Aorta (tissue), 5 donors: ENCODE measurements at regions of chr4 and their contacts with region 1.

Region 1: DNA sequence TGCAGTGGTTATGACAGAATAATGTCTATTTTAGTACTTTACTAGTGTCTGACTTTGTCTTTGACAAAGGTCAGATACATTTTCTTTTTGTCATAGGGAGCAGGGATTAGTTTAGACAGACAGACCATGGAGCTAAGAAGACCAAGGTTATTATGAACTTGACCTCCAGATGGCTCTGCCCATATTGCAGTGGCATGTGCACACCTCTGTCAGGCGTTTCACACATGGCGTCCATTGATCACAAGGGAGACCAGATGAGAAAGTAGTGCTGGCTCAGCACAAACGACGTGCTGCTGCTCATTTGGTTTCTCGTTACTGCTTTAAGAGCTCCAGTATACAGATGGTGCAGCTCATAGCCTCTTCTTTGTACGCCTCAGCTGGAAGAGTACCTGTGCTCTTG is 56.3 kb upstream of the HPSE start:
- DNase-seq: no peak
- ATAC-seq: no peak
- H3K4me3 ChIP-seq: peak overlapping the region in 1 of 2 donors; percentile 3
- H3K27ac ChIP-seq: no peak overlapping the region
- H3K4me1 ChIP-seq: no peaks in the 10 kb centered on the region
- H3K27me3 ChIP-seq: no peaks in the 10 kb centered on the region

Region 2: DNA sequence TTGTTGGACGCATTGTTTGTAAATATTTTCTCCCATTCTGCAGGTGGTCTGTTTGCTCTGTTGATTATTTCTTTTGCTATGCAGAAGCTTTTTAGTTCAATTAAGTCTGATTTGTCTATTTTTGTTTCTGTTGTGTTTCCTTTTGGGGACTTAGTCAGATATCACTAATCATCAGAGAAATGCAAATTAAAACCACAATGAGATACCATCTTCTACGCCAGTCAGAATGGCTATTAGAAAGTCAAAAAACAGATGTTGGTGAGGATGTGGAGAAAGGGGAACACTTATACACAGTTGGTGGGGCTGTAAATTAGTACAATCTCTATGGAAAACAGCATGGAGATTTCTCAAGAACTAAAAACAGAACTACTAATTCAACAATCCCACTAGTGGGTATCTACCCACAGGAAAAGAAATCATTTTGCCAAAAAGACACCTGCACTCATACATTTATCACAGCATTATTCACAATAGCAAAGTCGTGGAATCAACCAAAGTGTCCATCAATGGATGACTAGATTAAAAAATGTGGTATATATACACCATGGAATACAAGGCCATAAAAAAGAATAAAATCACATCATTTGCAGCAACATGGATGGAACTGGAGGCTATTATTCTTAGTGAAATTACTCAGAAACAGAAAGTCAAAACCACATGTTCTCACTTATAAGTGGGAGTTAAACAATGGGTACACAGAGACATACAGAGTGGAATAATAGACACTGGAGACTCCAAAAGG is 114.5 kb before region 1 on chr4:
- intact Hi-C with region 1: no loop called
- DNase-seq: no peak
- ATAC-seq: no peak
- H3K4me3 ChIP-seq: no peak overlapping the region
- H3K27ac ChIP-seq: no peak overlapping the region
- H3K4me1 ChIP-seq: no peaks in the 10 kb centered on the region
- H3K27me3 ChIP-seq: no peaks in the 10 kb centered on the region

Region 3: GRCh38 chr4:83297548-83298260 is 93.2 kb before region 1 on chr4:
- intact Hi-C with region 1: no loop called
- DNase-seq: no peak
- ATAC-seq: no peak
- H3K4me3 ChIP-seq: no peak overlapping the region
- H3K27ac ChIP-seq: no peak overlapping the region
- H3K4me1 ChIP-seq: no peaks in the 10 kb centered on the region
- H3K27me3 ChIP-seq: no peaks in the 10 kb centered on the region

Region 4: GRCh38 chr4:83320548-83320947 is 70.4 kb before region 1 on chr4:
- intact Hi-C with region 1: loop called in 1 of 2 experiments (anchors 10 kb)
- DNase-seq: peak; percentile 75 to 90
- ATAC-seq: peak; percentile 63
- H3K4me3 ChIP-seq: no peak overlapping the region
- H3K27ac ChIP-seq: no peak overlapping the region
- H3K4me1 ChIP-seq: no peaks in the 10 kb centered on the region
- H3K27me3 ChIP-seq: no peaks in the 10 kb centered on the region

Region 5: DNA sequence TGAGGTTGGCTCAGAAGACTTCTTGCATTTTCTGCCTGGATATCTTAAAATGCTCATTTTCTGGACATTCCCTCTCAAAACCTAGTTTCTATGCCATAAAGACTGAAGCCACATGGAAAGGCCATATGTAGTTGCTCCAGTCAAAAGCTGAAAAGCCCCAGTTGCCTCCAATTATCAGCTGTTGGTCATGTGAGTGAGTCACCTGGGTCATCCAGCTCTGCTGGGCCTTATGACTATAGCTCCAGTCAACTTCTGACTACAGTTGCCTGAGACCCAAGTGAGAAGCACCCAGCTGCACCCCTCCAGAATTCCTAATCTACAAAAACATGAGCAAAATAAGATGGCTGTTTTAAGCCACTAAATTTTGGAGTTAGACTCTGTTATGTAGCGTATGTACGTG is 22.7 kb after region 1 on chr4:
- intact Hi-C with region 1: no loop called
- DNase-seq: no peak
- ATAC-seq: no peak
- H3K4me3 ChIP-seq: no peak overlapping the region
- H3K27ac ChIP-seq: no peak overlapping the region
- H3K4me1 ChIP-seq: no peaks in the 10 kb centered on the region
- H3K27me3 ChIP-seq: no peaks in the 10 kb centered on the region